ENCODE measurements at regions of chr14 and their contacts with region 1.

Region 1: GRCh38 chr14:105086833-105087307 is 21.6 kb upstream of the GPR132 start:
- DNase-seq: peak; percentile 90
- ATAC-seq: peak; percentile 90
- H3K4me3 Mint-ChIP-seq: peak overlapping the region; percentile 74
- H3K27ac Mint-ChIP-seq: no peak overlapping the region
- H3K4me1 Mint-ChIP-seq: peaks cover 31% of the 10 kb centered on the region
- H3K27me3 Mint-ChIP-seq: peaks cover 19% of the 10 kb centered on the region

Region 2: GRCh38 chr14:105065280-105066228 is 21.3 kb before region 1 on chr14 and contains the start of gene GPR132:
- CTCF ChIA-PET with region 1: interaction called, 134 read pairs
- POLR2A ChIA-PET with region 1: interaction called, 21 read pairs
- DNase-seq: peak; percentile 97
- ATAC-seq: peak; percentile 86
- H3K4me3 Mint-ChIP-seq: peak within 1 kb of the TSS; percentile 88
- H3K27ac Mint-ChIP-seq: peak within 1 kb of the TSS; percentile 94
- H3K4me1 Mint-ChIP-seq: peaks cover 74% of the 10 kb centered on the region
- H3K27me3 Mint-ChIP-seq: no peaks in the 10 kb centered on the region
- total RNA-seq, gene GPR132: 35.7 to 40.4 TPM

Region 3: GRCh38 chr14:105075379-105076295 is 11.2 kb before region 1 on chr14:
- CTCF ChIA-PET with region 1: interaction called, 97 read pairs
- POLR2A ChIA-PET with region 1: interaction called, 4 read pairs
- DNase-seq: peak; percentile 80
- ATAC-seq: peak; percentile 72
- H3K4me3 Mint-ChIP-seq: peak overlapping the region; percentile 31
- H3K27ac Mint-ChIP-seq: peak overlapping the region; percentile 75
- H3K4me1 Mint-ChIP-seq: peaks cover 51% of the 10 kb centered on the region
- H3K27me3 Mint-ChIP-seq: peaks cover 15% of the 10 kb centered on the region

Region 4: DNA sequence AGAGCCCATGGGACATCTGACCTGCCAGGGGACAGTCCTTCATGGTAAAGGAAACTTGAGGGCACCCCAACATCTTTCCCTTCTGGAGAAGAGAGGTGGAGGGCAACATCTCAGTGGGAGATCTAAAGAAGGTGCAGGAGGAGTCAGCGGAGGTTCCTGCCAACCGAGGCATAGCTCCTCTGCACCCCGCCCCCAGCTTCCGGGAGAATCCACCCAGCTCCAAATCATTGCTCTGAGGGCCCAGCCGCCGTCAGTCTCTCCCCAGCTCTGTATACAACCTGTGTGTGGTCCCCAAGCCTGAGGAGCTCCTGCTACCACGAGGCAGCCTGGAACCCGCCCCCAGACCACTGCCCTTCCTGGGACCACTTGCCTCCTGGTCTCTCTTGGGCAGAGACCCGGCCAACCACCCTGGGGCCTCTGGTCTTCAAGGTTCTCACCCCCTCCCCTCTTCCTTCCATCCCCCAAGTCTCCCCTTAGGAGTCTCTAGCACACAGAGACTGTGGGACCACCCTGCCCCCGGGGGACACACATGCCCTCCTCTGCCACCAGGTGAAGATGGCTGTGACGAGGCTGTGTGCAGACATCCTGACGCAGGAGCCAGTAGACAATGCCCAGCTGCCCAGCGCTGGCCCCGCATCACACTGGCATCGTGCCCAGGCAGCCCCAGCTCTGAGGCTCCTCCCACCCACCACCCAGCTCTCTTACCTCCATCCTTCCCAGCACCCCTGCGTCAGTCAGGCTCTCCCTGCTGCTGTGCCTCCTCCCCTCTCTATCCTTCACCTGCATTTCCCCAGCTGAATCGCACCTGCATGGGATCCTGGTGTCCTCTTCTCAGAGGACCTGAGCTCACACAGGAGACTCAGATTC is 107.3 kb after region 1 on chr14:
- CTCF ChIA-PET with region 1: interaction called, 13 read pairs
- POLR2A ChIA-PET with region 1: no interaction called
- DNase-seq: peak; percentile 64
- ATAC-seq: peak; percentile 48
- H3K4me3 Mint-ChIP-seq: no peak overlapping the region
- H3K27ac Mint-ChIP-seq: peak overlapping the region; percentile 29
- H3K4me1 Mint-ChIP-seq: peaks cover 41% of the 10 kb centered on the region
- H3K27me3 Mint-ChIP-seq: peaks cover 18% of the 10 kb centered on the region

Region 5: GRCh38 chr14:105351920-105352851 is 265.3 kb after region 1 on chr14:
- CTCF ChIA-PET with region 1: interaction called, 23 read pairs
- POLR2A ChIA-PET with region 1: no interaction called
- DNase-seq: peak; percentile 94
- ATAC-seq: peak; percentile 97
- H3K4me3 Mint-ChIP-seq: no peak overlapping the region
- H3K27ac Mint-ChIP-seq: peak overlapping the region; percentile 43
- H3K4me1 Mint-ChIP-seq: peaks cover 3% of the 10 kb centered on the region
- H3K27me3 Mint-ChIP-seq: no peaks in the 10 kb centered on the region

Measured in activated CD8-positive, alpha-beta T cell treated with anti-CD3 and anti-CD28 coated beads, Interleukin-2, amount 10 ng/mL, durations not matched to agents 7 days and 5 days (primary cell).